Activated CD4-positive, alpha-beta memory T cell treated with anti-CD3 and anti-CD28 coated beads for 36 hours (primary cell): ENCODE measurements at regions of chr9 and their contacts with region 1.

Region 1: GRCh38 chr9:35732122-35732799 is at the starts of genes CREB3 and TLN1:
- DNase-seq: peak; percentile 99
- H3K4me3 Mint-ChIP-seq: no peak within 1 kb of the TSS
- H3K27ac Mint-ChIP-seq: no peak within 1 kb of the TSS
- H3K4me1 Mint-ChIP-seq: peaks cover 22% of the 10 kb centered on the region
- H3K27me3 Mint-ChIP-seq: no peaks in the 10 kb centered on the region
- total RNA-seq, gene CREB3: 27.7 to 29.9 TPM
- total RNA-seq, gene TLN1: 285 to 287 TPM

Region 2: DNA sequence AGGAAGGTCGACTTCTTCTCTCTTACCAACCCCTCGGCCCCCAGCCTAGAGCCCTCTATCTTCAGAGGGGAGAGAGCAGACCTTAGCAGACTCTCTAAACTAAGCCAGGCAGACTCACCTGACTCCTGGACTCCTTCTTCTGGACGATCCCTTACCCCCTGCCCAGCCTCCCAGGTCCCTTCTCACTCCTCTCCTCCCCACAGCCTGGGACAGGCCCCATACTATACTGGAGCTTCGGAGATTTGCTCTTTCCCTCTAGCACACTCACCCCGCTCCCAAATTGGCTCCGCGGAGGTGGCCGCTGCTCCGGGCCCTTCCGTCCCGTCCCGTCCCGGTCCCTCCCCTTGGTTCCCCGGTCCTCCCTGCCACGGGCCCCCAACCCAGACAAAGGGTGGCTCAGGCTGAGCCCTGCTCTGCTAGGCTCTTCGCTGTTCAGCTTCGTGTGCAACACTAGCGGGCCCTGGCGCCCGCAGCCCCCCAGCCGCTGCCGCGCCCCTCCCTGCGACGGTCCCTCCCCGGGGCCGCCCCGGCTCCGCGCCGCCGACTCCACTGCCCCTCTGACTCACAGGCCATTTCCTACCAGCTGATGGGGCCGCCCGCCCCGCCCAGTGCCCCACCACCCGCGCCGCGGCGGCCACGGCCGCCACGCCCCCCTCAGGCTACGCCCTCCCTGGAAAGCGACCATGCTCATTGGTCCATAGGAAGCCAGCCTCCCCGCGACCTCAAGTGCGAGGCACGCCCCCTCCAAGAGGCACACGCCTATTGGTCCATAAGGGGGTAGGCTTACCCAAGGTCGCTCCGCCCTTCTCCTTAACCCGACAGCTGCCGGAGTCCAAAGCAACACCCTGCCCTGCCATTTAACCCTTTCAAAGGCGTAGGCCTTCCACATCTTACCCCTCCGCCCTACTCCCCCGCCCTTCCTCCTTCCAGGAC is 621.0 kb before region 1 on chr9:
- CTCF ChIA-PET with region 1: no interaction called
- POLR2A ChIA-PET with region 1: no interaction called
- intact Hi-C with region 1: loop called (anchors 5 kb)
- DNase-seq: peak; percentile 98
- H3K4me3 Mint-ChIP-seq: peak overlapping the region; percentile 75
- H3K27ac Mint-ChIP-seq: peak overlapping the region; percentile 81
- H3K4me1 Mint-ChIP-seq: peaks cover 42% of the 10 kb centered on the region
- H3K27me3 Mint-ChIP-seq: no peaks in the 10 kb centered on the region

Region 3: DNA sequence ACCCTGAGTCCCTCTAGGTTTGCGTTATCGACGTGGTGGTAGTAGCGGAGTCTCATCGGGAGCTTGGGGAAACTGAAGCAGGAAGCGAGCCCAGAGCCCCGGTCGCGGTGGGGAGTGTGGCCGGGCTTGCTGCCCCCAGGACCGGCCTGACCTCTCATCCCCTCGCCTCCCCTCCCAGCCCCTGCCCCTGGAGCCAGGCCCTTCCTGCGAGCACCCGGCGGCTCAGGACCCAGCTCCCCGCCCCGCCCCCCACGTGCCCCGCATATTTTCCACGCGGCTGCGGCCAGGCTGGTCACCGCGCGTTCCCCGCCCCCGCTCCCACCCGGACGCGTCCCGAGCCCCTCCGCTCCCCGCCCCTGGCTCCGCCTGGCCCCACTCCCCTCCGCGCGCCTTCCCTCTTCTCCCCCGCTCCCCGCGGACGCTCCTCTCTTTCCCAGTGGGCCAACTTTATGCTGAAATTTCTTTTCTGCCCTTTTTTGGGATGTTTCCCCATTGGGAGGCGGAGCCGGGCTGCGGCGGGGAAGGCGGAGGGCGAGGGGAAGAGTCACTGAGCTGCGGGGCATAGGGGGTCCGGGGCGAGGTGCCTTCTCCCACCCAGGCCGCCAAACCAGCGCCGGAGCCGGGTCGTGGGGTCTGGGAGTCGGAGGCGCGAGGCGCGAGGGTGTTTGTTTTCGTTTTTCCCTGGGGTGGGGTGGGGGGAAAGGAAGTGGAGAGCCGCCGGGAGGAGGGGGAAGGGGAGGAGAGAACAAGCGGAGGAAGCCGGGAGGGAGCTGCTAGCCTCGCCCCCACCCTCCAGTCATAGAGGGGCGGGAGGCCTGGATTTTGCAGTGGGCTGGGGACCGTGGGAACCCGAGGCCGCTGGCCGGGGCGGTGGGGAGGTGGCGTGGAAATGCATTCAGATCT is 41.6 kb before region 1 on chr9:
- CTCF ChIA-PET with region 1: interaction called, 82 read pairs
- POLR2A ChIA-PET with region 1: interaction called, 6 read pairs
- intact Hi-C with region 1: loop called (anchors 2 kb)
- DNase-seq: peak; percentile 56
- H3K4me3 Mint-ChIP-seq: peak overlapping the region; percentile 75
- H3K27ac Mint-ChIP-seq: no peak overlapping the region
- H3K4me1 Mint-ChIP-seq: peaks cover 21% of the 10 kb centered on the region
- H3K27me3 Mint-ChIP-seq: no peaks in the 10 kb centered on the region

Region 4: DNA sequence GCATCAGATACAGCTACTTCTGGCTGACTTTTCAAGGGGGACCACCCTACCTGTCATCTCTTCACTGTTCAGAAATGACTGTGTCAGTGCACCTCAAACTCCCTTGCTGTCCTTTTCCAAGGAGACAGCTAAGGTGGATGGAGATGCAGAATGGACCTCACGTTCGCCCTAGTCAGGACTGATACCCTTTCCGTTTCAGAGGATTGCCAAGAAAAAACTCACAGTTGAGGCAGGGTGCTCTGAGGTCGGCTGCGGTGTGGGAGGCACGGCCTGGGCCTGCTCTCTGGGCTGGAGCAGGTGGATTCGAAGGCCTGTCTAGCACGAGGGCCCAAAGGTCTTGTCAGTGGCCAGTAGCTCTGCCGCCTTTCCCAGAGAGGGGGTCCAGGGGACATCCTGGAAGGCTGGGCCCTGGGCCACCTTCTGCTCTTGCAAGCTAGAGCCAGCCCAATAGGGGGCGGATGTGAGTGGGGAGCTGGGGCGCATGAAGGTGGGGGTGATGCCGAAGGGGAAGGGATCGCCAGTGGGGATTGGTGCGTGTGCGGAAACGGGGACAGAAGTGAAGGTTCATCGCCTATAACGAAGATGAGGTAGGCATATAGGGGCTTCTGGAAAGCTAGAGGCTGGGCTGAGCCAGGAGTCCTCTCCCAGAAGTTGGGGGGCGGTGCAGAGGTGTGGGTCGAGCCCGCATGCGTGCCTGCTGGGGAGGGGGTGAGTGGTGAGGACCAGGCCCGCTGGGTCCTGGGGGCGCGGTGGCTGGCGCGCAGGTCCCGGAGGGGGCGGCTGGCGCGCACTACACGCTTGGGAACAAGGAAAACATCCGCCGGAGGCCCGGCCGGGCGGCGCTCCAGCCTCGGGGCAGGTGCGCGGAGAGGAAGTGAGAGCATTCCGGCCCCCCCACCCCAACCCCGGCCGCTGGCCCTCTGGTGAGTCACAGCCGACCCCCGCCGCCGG is 24.3 kb after region 1 on chr9:
- CTCF ChIA-PET with region 1: interaction called, 24 read pairs
- POLR2A ChIA-PET with region 1: interaction called, 13 read pairs
- intact Hi-C with region 1: loop called (anchors 2 kb)
- DNase-seq: peak; percentile 89
- H3K4me3 Mint-ChIP-seq: peak overlapping the region; percentile 96
- H3K27ac Mint-ChIP-seq: peak overlapping the region; percentile 95
- H3K4me1 Mint-ChIP-seq: peaks cover 35% of the 10 kb centered on the region
- H3K27me3 Mint-ChIP-seq: no peaks in the 10 kb centered on the region

Region 5: DNA sequence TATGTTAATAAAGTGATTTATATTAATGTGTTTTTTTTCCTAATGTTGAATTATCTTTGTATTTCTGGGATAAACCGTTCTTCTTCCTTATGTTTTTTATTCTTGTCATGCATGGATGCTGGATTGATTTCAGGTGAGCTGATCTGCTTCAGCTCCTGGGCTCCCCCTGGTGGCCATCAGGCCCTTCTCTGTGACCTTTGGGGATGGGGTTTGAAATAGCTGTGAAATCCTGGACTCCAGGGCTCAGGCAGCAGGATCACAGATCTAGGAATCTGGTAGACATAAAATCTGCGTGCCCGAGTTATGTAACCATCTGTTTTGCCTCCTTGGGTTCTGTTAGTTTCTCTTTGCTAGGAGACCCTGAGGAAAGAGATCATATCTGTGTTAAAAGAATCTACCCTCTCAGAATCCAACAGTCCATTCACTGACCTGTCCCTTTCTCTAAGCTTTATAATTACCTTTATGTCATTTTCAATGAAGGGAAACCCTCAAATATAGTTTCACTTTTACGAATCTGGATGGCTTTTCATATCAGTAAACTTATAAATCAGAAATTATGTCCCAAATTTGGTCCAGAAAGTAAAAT is 150.1 kb after region 1 on chr9:
- CTCF ChIA-PET with region 1: interaction called, 21 read pairs
- POLR2A ChIA-PET with region 1: no interaction called
- intact Hi-C with region 1: no loop called
- DNase-seq: peak; percentile 84
- H3K4me3 Mint-ChIP-seq: no peak overlapping the region
- H3K27ac Mint-ChIP-seq: no peak overlapping the region
- H3K4me1 Mint-ChIP-seq: no peaks in the 10 kb centered on the region
- H3K27me3 Mint-ChIP-seq: no peaks in the 10 kb centered on the region